ENCODE measurements at regions of chr5 and their contacts with region 1.

Region 1: DNA sequence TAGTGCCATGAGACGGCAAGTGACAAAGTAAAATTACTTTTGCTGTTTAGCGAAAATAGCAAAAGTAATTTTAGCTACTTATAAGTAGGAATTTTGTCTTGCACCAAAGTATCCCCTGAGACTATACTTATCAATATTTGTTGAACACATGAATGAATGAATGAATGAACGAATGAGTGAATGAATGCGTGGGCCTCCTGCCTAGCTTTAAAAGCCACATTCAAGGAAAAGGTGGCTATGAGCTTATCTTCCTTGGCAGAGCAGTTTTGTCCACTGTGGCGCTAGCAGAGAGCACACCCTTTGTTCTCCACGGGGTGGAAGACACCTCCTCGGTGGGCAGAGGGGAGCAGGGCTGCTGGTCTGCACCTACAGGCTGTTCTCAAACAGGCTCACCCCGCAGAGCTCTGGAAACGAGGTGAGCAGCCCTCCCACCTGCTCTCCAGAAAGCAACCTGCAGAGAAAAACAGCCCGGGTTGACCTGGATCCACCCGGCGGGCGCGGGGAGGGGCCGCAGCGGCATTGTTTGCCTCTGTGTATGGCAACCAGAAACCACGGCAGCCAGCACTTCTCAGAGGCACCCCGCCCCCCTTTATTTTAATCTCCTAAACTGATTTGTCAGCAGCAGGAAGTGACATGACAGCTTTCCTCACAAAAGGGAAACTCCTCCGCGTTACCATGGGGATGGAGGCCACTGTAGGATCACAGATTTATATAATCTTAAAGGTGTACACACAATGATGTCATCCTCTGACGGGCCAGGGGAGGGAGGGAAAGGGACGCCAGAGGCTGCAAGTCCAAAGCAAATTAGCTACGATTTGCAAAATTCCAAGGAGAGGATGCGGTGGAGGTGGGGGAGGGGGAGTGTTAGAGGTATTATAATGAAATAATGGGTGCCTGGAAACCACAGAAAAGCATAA is 5.9 kb downstream of the DUSP1 start:
- DNase-seq: peak; percentile 95
- ATAC-seq: peak; percentile 77
- H3K4me3 ChIP-seq: peak overlapping the region; percentile 42 to 78
- H3K27ac ChIP-seq: peak overlapping the region; percentile 94
- H3K4me1 ChIP-seq: peaks cover 36% of the 10 kb centered on the region
- H3K27me3 ChIP-seq: no peaks in the 10 kb centered on the region
- CTCF ChIP-seq: no peak

Region 2: DNA sequence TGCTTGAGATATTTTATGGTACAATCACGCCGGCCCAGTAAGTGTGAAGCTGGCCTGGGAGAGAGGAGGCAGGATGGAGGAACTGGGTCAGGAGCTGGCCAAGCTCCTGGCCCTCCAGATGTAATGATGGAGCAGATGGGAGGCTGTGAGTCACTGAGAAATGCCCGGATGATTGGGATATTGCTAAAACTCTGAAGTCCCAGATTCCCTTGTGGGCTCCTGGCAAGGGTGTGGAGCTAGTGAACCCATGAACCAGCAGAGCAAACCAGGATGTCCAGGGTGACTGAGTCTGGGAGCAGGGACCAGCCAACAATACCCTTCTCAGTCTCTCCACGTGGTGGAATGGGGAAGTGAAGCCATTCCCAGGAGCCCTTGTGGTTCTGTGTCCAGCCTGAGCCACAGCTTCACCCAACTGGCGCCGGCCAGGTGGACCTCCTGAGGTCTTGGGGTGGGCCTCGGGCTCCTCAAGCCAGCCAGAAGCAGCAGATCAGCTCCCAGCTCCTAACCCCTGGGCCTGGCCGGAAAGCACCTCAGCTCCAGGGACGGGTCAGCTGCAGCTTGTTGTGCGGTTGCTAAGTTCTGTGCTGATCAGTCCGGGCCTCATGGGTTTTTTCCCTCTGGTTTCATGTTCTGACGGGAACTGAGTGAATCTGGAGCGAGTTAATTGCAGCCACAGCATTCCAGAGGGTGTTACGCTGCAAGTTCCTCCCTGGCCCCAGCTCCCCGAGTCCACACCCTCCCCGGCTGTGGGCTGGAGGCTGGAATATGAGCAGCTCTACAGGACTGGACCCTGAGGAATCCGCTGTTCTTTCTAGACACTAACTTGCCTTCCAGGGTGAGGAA is 31.8 kb before region 1 on chr5:
- CTCF ChIA-PET with region 1: no interaction called
- POLR2A ChIA-PET with region 1: interaction called, 6 read pairs
- in situ Hi-C with region 1: no loop called
- intact Hi-C with region 1: loop called (anchors 5 kb)
- DNase-seq: no peak
- ATAC-seq: peak; percentile 84
- H3K4me3 ChIP-seq: no peak overlapping the region
- H3K27ac ChIP-seq: peak overlapping the region; percentile 78
- H3K4me1 ChIP-seq: peaks cover 23% of the 10 kb centered on the region
- H3K27me3 ChIP-seq: no peaks in the 10 kb centered on the region
- CTCF ChIP-seq: no peak

Region 3: DNA sequence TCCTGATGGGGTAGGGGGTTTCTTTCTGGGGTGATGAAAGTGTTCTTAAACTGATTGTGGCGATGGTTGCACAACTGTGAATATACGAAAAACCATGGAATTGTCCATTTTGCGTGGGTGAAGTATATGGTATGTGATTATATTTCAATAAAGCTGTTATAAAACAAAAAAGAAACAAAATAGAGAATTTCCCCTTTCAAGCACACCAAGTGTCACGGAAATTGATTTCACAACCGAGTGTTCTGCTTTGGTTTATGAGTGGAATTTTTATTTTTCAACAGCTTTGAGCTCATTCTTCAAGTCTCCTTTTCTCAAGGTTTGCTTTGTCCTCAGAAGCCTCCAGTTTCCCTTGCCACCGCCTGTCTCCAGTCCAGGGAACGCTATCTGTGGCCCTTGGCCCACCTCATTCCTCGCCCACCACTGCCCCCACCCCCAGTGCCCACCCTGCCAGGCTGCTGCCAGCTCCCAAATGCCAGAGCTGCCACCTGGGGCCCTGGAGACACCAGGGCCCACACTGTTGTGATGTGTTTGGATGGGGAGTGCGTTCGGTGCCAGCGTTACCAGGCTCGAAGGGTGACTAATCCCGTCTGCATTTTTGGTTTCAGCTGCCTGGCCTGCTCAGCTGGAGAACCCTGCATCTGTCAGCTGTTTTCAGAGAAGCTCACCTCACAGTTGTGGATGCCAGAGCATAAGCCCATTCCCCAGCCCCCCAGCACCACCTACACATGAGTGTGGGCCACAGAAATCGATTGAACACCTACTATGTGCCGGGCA is 24.5 kb before region 1 on chr5:
- CTCF ChIA-PET with region 1: no interaction called
- POLR2A ChIA-PET with region 1: interaction called, 12 read pairs
- in situ Hi-C with region 1: no loop called
- intact Hi-C with region 1: no loop called
- DNase-seq: no peak
- ATAC-seq: peak; percentile 94
- H3K4me3 ChIP-seq: no peak overlapping the region
- H3K27ac ChIP-seq: peak overlapping the region; percentile 64
- H3K4me1 ChIP-seq: peaks cover 16% of the 10 kb centered on the region
- H3K27me3 ChIP-seq: no peaks in the 10 kb centered on the region
- CTCF ChIP-seq: no peak

Measured in Panc1 (cell line).